Transverse colon (tissue), 4 donors: ENCODE measurements at regions of chr5 and their contacts with region 1.

Region 1: GRCh38 chr5:154754460-154755360 is 467 bp upstream of the LARP1 start:
- DNase-seq: peak; percentile 100
- H3K4me3 ChIP-seq: peak overlapping the region; percentile 92 to 98 (median 98)
- H3K27ac ChIP-seq: peak overlapping the region; percentile 98 to 100 (median 99)
- H3K4me1 ChIP-seq: peaks cover 10 to 39% (median 34%) of the 10 kb centered on the region in 4 donors
- H3K27me3 ChIP-seq: no peaks in the 10 kb centered on the region
- CTCF ChIP-seq: peak; percentile 21 to 69 (median 47)
- EP300 ChIP-seq: no peak
- POLR2A ChIP-seq: peak; percentile 54

Region 2: DNA sequence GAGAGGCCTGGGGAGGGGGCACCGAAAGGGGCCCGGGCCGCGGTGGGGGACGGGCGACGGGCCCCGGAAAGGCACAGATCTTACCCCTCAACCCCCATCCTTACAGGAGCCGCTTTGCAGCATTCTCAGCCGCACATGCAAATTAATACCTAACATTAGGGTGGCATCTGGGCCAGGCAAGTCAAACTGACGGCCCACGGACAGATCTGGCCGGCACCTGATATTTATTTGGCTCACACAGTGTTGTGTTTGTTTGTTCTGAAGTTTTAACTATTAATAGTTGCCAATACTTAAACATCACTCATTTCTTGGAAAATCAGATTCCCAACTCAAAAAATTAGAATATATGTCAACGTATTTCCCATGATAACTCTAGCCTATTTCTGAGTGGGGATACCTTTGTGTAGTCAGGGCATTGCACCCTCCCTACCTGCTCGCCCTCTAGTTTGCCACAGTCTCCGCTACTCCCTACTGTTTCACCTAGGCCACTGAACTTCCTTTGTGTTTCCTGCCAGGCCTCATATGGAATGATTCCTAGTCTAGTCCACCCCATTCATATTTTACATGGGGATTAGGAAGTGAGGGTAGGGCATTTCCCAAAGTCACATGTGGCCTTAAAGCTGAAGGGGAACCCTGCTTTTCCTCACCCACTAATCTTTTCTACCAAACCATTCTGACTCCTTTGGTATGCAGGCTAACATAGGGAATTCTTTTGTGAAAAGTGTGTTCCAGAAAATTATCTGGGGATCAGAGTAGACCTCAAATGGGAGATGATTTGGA is 71.4 kb before region 1 on chr5:
- in situ Hi-C with region 1: no loop called
- intact Hi-C with region 1: loop called (anchors 5 kb)
- DNase-seq: no peak
- H3K4me3 ChIP-seq: peak overlapping the region; percentile 9 to 56 (median 32)
- H3K27ac ChIP-seq: peak overlapping the region; percentile 79 to 85 (median 83)
- H3K4me1 ChIP-seq: peaks cover 4 to 17% (median 9%) of the 10 kb centered on the region in 4 donors
- H3K27me3 ChIP-seq: no peaks in the 10 kb centered on the region
- CTCF ChIP-seq: no peak
- EP300 ChIP-seq: no peak
- POLR2A ChIP-seq: no peak

Region 3: GRCh38 chr5:154857530-154858296 is 103.0 kb after region 1 on chr5:
- in situ Hi-C with region 1: loop called in 1 of 4 experiments (anchors 10 kb)
- intact Hi-C with region 1: loop called (anchors 5 kb)
- DNase-seq: peak; percentile 92
- H3K4me3 ChIP-seq: peak overlapping the region; percentile 73 to 97 (median 77)
- H3K27ac ChIP-seq: peak overlapping the region; percentile 95 to 99 (median 98)
- H3K4me1 ChIP-seq: peaks cover 23 to 44% (median 40%) of the 10 kb centered on the region in 4 donors
- H3K27me3 ChIP-seq: no peaks in the 10 kb centered on the region
- CTCF ChIP-seq: no peak
- EP300 ChIP-seq: no peak
- POLR2A ChIP-seq: peak; percentile 74